GM23248 (cell line): ENCODE measurements at regions of chr20 and their contacts with region 1.

Region 1: GRCh38 chr20:23340524-23340923 is 10.1 kb upstream of the NXT1 start:
- DNase-seq: peak; percentile 76
- H3K4me3 ChIP-seq: no peak overlapping the region
- H3K27ac ChIP-seq: no peak overlapping the region
- H3K4me1 ChIP-seq: no peaks in the 10 kb centered on the region
- H3K27me3 ChIP-seq: no peaks in the 10 kb centered on the region

Region 2: GRCh38 chr20:22691369-22692118 is 649.0 kb before region 1 on chr20:
- in situ Hi-C with region 1: loop called (anchors 5 kb)
- DNase-seq: peak; percentile 85
- H3K4me3 ChIP-seq: peak overlapping the region; percentile 41; the same call in 1 of the 2 replicates
- H3K27ac ChIP-seq: no peak overlapping the region
- H3K4me1 ChIP-seq: no peaks in the 10 kb centered on the region
- H3K27me3 ChIP-seq: no peaks in the 10 kb centered on the region